ENCODE measurements at regions of chr9 and their contacts with region 1.

Region 1: GRCh38 chr9:71604197-71605063 is 163.9 kb downstream of the CEMIP2 start:
- DNase-seq: peak; percentile 54
- H3K4me3 ChIP-seq: no peak overlapping the region
- H3K27ac ChIP-seq: no peak overlapping the region
- H3K27me3 ChIP-seq: no peaks in the 10 kb centered on the region
- CTCF ChIP-seq: peak; percentile 89

Region 2: DNA sequence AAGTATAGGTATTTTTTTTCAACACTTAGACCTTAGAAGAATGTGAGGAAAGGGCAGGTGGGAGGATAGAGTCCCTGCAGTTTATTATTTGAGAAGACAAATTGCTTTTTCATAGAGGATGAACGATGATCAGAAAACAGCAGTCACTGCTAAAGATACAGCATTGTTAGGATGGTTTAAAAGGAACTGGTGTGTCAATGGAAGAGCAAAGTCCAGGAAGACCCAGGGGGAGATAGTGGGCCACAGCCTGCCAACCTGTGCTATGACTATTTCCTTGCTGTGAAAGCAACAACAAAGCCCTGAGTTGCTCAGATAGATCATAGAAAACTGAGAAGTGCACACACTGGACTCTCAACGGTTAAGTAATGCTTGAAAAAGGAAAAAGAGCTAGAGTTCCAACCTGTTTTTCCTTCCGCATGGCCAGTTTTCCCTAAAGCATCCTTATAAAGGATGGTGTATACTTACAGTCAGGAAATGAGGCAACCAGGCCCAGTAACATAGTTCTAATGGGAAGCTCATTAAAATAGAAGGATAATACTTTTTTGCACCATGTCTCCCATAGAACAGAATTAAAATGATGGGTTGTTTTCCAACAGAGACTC is 10.1 kb after region 1 on chr9:
- CTCF ChIA-PET with region 1: interaction called, 10 read pairs
- POLR2A ChIA-PET with region 1: no interaction called
- DNase-seq: no peak
- H3K4me3 ChIP-seq: no peak overlapping the region
- H3K27ac ChIP-seq: no peak overlapping the region
- H3K27me3 ChIP-seq: peaks cover 2% of the 10 kb centered on the region
- CTCF ChIP-seq: no peak

Region 3: GRCh38 chr9:71683598-71684235 is 79.3 kb after region 1 on chr9:
- CTCF ChIA-PET with region 1: interaction called, 20 read pairs
- POLR2A ChIA-PET with region 1: no interaction called
- DNase-seq: no peak
- H3K4me3 ChIP-seq: no peak overlapping the region
- H3K27ac ChIP-seq: no peak overlapping the region
- H3K27me3 ChIP-seq: no peaks in the 10 kb centered on the region
- CTCF ChIP-seq: peak; percentile 40

Region 4: GRCh38 chr9:71725590-71726338 is 121.3 kb after region 1 on chr9:
- CTCF ChIA-PET with region 1: no interaction called
- POLR2A ChIA-PET with region 1: no interaction called
- DNase-seq: peak; percentile 80
- H3K4me3 ChIP-seq: no peak overlapping the region
- H3K27ac ChIP-seq: no peak overlapping the region
- H3K27me3 ChIP-seq: no peaks in the 10 kb centered on the region
- CTCF ChIP-seq: no peak

Region 5: GRCh38 chr9:71758785-71759184 is 154.4 kb after region 1 on chr9:
- CTCF ChIA-PET with region 1: interaction called, 12 read pairs
- POLR2A ChIA-PET with region 1: no interaction called
- DNase-seq: no peak
- H3K4me3 ChIP-seq: no peak overlapping the region
- H3K27ac ChIP-seq: no peak overlapping the region
- H3K27me3 ChIP-seq: no peaks in the 10 kb centered on the region
- CTCF ChIP-seq: no peak

Region 6: DNA sequence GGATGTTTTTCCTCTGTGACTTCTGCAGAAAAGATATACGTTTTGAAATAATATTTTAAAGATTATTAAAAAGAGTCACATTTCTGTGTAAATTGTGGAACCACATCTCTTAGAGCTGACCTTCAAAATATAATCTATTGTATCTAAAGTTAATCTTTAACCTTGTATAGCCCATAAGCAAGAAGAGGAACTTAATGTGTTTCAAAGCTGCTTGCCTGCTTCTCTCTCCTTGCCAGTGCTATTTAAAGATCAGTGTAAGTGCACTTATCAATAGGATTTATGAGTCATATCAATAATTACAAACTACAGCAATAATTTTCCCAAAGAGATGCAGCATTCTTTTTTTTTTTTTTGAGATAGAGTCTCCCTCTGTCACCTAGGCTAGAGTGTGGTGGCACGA is 515.4 kb after region 1 on chr9:
- CTCF ChIA-PET with region 1: no interaction called
- POLR2A ChIA-PET with region 1: no interaction called
- DNase-seq: no peak
- H3K4me3 ChIP-seq: no peak overlapping the region
- H3K27ac ChIP-seq: no peak overlapping the region
- H3K27me3 ChIP-seq: no peaks in the 10 kb centered on the region
- CTCF ChIP-seq: no peak

Measured in AG04450 (cell line).